ENCODE measurements at regions of chr10 and their contacts with region 1.

Region 1: DNA sequence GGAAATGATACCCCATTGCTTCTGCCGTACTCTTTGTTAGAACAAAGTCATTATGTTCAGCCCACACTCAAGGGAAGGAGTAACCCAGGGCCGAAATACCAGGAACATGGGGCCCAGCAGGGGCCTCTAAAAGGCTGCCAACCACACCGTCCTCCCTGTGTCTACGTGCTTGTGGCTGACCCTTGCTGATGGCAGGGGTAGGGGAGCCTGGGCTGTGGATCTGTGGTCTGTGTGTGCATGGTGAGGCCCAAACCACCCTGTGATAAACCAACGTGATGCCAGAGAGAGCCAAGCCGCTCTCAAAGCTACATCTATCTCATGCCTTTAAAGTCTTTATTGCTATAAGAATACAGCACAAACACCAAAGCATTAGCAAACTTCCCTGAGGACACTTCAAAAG is 159.2 kb downstream of the CCDC3 start:
- DNase-seq: no peak
- H3K4me3 ChIP-seq: no peak overlapping the region
- H3K27ac ChIP-seq: no peak overlapping the region
- H3K4me1 ChIP-seq: peaks cover 11% of the 10 kb centered on the region
- H3K27me3 ChIP-seq: no peaks in the 10 kb centered on the region
- CTCF ChIP-seq: no peak

Region 2: GRCh38 chr10:12758271-12758670 is 84.0 kb before region 1 on chr10:
- CTCF ChIA-PET with region 1: no interaction called
- POLR2A ChIA-PET with region 1: no interaction called
- intact Hi-C with region 1: no loop called
- DNase-seq: no peak
- H3K4me3 ChIP-seq: no peak overlapping the region
- H3K27ac ChIP-seq: no peak overlapping the region
- H3K4me1 ChIP-seq: no peaks in the 10 kb centered on the region
- H3K27me3 ChIP-seq: no peaks in the 10 kb centered on the region
- CTCF ChIP-seq: no peak

Region 3: DNA sequence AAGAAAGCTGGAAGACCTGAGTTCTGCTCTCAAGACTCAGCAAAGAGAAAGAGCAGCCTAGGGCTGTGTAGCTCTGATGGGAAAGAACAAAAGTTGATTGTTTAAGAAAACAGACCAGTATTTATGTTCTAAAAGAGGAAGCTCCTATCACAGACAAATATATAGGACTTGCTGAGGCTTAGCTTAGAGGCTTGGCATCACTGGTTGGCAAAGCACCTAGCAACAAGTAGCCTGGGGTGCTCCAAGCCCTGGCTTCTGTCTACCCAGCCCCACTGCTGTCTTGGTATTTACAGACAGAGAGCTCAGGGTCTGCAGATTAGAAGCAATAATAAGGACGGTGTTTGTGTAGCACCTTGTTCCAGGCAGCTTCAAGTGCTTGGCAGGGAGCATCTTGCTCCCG is 196.1 kb after region 1 on chr10:
- CTCF ChIA-PET with region 1: interaction called, 11 read pairs
- POLR2A ChIA-PET with region 1: no interaction called
- intact Hi-C with region 1: no loop called
- DNase-seq: no peak
- H3K4me3 ChIP-seq: no peak overlapping the region
- H3K27ac ChIP-seq: no peak overlapping the region
- H3K4me1 ChIP-seq: no peaks in the 10 kb centered on the region
- H3K27me3 ChIP-seq: no peaks in the 10 kb centered on the region
- CTCF ChIP-seq: no peak

Measured in A673 (cell line).